ENCODE measurements at regions of chr18 and their contacts with region 1.

Region 1: DNA sequence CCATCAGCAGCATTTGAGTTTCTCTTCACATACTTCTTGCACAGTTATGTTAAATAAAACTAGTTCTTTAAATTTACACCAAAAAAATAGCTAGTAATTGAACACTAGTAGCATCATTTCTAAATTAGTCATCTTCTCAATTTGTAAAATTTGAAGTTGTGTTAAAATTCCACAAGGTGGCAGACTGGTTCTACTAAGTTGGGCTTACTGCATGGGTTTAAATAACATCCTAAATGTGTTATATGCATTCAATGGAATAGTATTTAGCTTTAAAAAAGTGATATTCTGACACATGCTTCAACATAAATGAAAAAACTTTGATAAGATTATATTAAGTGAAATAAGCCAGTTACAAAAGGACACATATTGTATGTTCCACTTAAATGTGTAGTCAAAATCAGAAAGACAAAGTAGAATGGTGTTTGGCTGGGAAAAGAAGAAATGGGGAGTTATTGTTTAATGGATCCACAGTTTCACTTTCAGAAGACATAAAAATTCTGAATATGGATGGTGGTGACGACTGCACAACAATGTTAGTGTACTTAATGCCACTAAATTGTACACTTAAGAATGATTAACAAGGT is 28.7 kb upstream of the RPRD1A start:
- DNase-seq: peak; percentile 65
- H3K4me3 ChIP-seq: no peak overlapping the region
- H3K27ac ChIP-seq: no peak overlapping the region
- H3K4me1 ChIP-seq: no peaks in the 10 kb centered on the region
- H3K27me3 ChIP-seq: no peaks in the 10 kb centered on the region
- CTCF ChIP-seq: peak; percentile 68

Region 2: GRCh38 chr18:35277633-35278032 is 818.4 kb before region 1 on chr18:
- CTCF ChIA-PET with region 1: no interaction called
- POLR2A ChIA-PET with region 1: no interaction called
- intact Hi-C with region 1: no loop called
- DNase-seq: no peak
- H3K4me3 ChIP-seq: no peak overlapping the region
- H3K27ac ChIP-seq: no peak overlapping the region
- H3K4me1 ChIP-seq: no peaks in the 10 kb centered on the region
- H3K27me3 ChIP-seq: no peaks in the 10 kb centered on the region
- CTCF ChIP-seq: no peak

Region 3: DNA sequence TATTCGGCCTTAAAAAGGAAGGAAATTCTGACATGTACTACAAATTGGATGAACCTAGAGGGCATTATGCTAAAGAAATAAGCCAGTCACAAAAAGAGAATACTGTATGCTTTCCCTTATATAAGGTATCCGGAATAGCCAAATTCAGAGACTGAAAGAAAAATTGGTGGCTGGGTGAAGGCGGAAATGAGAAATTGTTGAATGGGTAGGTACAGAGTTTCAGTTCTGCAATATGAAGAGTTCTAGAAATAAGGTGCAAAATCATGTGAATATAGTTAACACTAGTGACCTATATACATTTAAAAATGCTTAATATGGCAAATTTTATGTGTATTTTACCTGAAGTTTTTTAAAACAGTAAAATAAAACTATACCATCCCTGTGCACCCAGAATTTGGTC is 80.4 kb before region 1 on chr18:
- CTCF ChIA-PET with region 1: interaction called, 3 read pairs
- POLR2A ChIA-PET with region 1: no interaction called
- intact Hi-C with region 1: loop called (anchors 5 kb)
- DNase-seq: no peak
- H3K4me3 ChIP-seq: no peak overlapping the region
- H3K27ac ChIP-seq: no peak overlapping the region
- H3K4me1 ChIP-seq: peaks cover 5% of the 10 kb centered on the region
- H3K27me3 ChIP-seq: no peaks in the 10 kb centered on the region
- CTCF ChIP-seq: no peak

Region 4: GRCh38 chr18:36284671-36285295 is 188.8 kb after region 1 on chr18:
- CTCF ChIA-PET with region 1: interaction called, 9 read pairs
- POLR2A ChIA-PET with region 1: no interaction called
- intact Hi-C with region 1: loop called (anchors 1 kb)
- DNase-seq: peak; percentile 73
- H3K4me3 ChIP-seq: no peak overlapping the region
- H3K27ac ChIP-seq: no peak overlapping the region
- H3K4me1 ChIP-seq: no peaks in the 10 kb centered on the region
- H3K27me3 ChIP-seq: peaks cover 30% of the 10 kb centered on the region
- CTCF ChIP-seq: peak; percentile 84

Region 5: DNA sequence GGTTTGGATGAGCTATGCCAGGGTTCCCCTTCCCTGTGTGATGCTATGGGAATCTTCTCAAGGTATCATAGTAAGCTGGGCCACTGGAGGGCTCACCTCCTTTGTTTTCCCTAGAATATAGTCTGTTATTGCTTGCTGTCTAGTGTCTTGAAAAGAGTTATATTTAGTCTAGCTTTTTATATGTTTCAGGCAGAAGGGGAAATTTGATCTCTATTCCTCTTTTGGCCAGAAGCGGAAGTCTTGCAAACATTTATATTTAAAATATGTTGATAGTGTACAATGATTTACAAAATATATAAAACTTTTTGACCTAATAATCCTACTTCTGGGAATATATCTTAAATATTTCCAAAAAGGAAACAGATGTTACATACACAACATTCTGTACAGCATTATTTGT is 462.2 kb after region 1 on chr18:
- CTCF ChIA-PET with region 1: no interaction called
- POLR2A ChIA-PET with region 1: no interaction called
- intact Hi-C with region 1: no loop called
- DNase-seq: no peak
- H3K4me3 ChIP-seq: no peak overlapping the region
- H3K27ac ChIP-seq: no peak overlapping the region
- H3K4me1 ChIP-seq: no peaks in the 10 kb centered on the region
- H3K27me3 ChIP-seq: peaks cover 4% of the 10 kb centered on the region
- CTCF ChIP-seq: no peak

Region 6: GRCh38 chr18:36572135-36572856 is 476.3 kb after region 1 on chr18:
- CTCF ChIA-PET with region 1: interaction called, 4 read pairs
- POLR2A ChIA-PET with region 1: no interaction called
- intact Hi-C with region 1: loop called (anchors 1 kb)
- DNase-seq: peak; percentile 57
- H3K4me3 ChIP-seq: no peak overlapping the region
- H3K27ac ChIP-seq: no peak overlapping the region
- H3K4me1 ChIP-seq: no peaks in the 10 kb centered on the region
- H3K27me3 ChIP-seq: peaks cover 18% of the 10 kb centered on the region
- CTCF ChIP-seq: peak; percentile 80

Region 7: GRCh38 chr18:36757081-36757480 is 661.1 kb after region 1 on chr18:
- CTCF ChIA-PET with region 1: no interaction called
- POLR2A ChIA-PET with region 1: no interaction called
- intact Hi-C with region 1: loop called (anchors 2 kb)
- DNase-seq: peak; percentile 58
- H3K4me3 ChIP-seq: no peak overlapping the region
- H3K27ac ChIP-seq: no peak overlapping the region
- H3K4me1 ChIP-seq: no peaks in the 10 kb centered on the region
- H3K27me3 ChIP-seq: peaks cover 3% of the 10 kb centered on the region
- CTCF ChIP-seq: peak; percentile 71

Measured in A673 (cell line).